Activated CD4-positive, alpha-beta T cell treated with anti-CD3 and anti-CD28 coated beads for 36 hours (primary cell): ENCODE measurements at regions of chr2 and their contacts with region 1.

Region 1: GRCh38 chr2:203730076-203730729 is 23.8 kb downstream of the CD28 start:
- DNase-seq: no peak
- ATAC-seq: peak; percentile 50
- H3K4me3 Mint-ChIP-seq: peak overlapping the region; percentile 46
- H3K27ac Mint-ChIP-seq: peak overlapping the region; percentile 99
- H3K4me1 Mint-ChIP-seq: peaks cover 93% of the 10 kb centered on the region
- H3K27me3 Mint-ChIP-seq: no peaks in the 10 kb centered on the region

Region 2: DNA sequence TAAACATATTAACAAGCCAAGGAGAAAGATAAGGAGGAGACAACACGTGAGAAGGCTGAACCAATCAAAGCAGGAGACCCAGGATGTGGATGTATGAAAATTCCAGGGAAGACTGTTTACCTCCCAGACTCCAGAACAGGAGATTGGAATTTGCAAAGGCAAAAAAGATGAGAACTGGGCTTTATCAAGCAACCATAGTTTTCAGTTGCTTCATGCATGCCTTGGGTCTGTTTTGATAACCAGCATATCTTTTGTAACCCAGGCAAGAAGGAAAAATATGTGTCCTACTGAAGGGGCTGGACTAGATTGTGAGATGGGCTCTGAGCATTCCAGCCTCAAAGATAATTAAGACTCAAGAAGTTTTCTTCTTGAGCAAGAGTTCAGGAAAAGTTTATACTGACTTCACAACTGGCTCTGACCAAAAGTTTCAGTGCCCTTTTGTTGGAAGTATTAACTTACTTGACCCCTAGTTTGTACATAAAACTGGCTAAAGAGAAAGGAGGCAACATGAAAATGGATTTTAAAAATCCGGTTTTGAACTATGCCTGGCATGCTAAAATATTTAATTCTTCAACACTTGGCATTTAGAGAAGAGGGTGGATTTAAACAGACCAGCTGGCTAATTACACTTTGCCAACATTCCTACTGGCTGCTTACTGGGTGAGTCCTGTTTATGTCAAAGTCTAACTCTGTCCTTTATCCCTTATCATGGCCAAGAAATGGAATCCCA is 103.1 kb before region 1 on chr2:
- CTCF ChIA-PET with region 1: no interaction called
- POLR2A ChIA-PET with region 1: no interaction called
- intact Hi-C with region 1: no loop called
- DNase-seq: no peak
- ATAC-seq: no peak
- H3K4me3 Mint-ChIP-seq: no peak overlapping the region
- H3K27ac Mint-ChIP-seq: no peak overlapping the region
- H3K4me1 Mint-ChIP-seq: peaks cover 8% of the 10 kb centered on the region
- H3K27me3 Mint-ChIP-seq: no peaks in the 10 kb centered on the region

Region 3: GRCh38 chr2:203718087-203718486 is 12.1 kb before region 1 on chr2:
- CTCF ChIA-PET with region 1: interaction called, 72 read pairs
- POLR2A ChIA-PET with region 1: interaction called, 37 read pairs
- intact Hi-C with region 1: loop called (anchors 1 kb)
- DNase-seq: peak; percentile 77
- ATAC-seq: peak; percentile 63
- H3K4me3 Mint-ChIP-seq: peak overlapping the region; percentile 63
- H3K27ac Mint-ChIP-seq: peak overlapping the region; percentile 95
- H3K4me1 Mint-ChIP-seq: peaks cover 97% of the 10 kb centered on the region
- H3K27me3 Mint-ChIP-seq: no peaks in the 10 kb centered on the region

Region 4: GRCh38 chr2:203759690-203760365 is 29.6 kb after region 1 on chr2:
- CTCF ChIA-PET with region 1: interaction called, 3 read pairs
- POLR2A ChIA-PET with region 1: interaction called, 23 read pairs
- intact Hi-C with region 1: loop called (anchors 1 kb)
- DNase-seq: no peak
- ATAC-seq: no peak
- H3K4me3 Mint-ChIP-seq: no peak overlapping the region
- H3K27ac Mint-ChIP-seq: no peak overlapping the region
- H3K4me1 Mint-ChIP-seq: peaks cover 61% of the 10 kb centered on the region
- H3K27me3 Mint-ChIP-seq: no peaks in the 10 kb centered on the region

Region 5: DNA sequence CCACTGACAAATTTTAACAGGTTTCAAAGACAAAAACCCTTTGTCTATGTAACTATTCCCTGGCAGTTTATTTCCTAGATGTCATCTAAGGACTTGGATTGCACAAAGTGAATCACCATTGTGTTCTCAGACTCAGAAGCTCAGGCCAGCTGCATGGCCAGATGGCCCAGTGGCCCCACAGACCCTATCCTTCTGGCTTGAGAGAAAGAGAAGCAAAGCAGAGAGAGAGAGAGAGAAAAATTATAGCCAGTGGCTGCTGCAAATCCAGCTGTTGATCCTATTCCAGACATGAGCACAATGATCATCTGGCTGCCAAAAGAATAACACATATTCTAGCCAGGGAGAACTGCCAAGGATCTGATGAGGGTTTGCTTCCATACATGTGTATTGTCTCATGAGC is 163.2 kb after region 1 on chr2:
- CTCF ChIA-PET with region 1: no interaction called
- POLR2A ChIA-PET with region 1: interaction called, 3 read pairs
- intact Hi-C with region 1: loop called in 1 of 2 experiments (anchors 2 kb)
- DNase-seq: no peak
- ATAC-seq: no peak
- H3K4me3 Mint-ChIP-seq: peak overlapping the region; percentile 23
- H3K27ac Mint-ChIP-seq: peak overlapping the region; percentile 85
- H3K4me1 Mint-ChIP-seq: peaks cover 78% of the 10 kb centered on the region
- H3K27me3 Mint-ChIP-seq: peaks cover 2% of the 10 kb centered on the region

Region 6: GRCh38 chr2:203940039-203940438 is 209.8 kb after region 1 on chr2:
- CTCF ChIA-PET with region 1: no interaction called
- POLR2A ChIA-PET with region 1: no interaction called
- intact Hi-C with region 1: loop called in 1 of 2 experiments (anchors 2 kb)
- DNase-seq: no peak
- ATAC-seq: peak; percentile 7
- H3K4me3 Mint-ChIP-seq: peak overlapping the region; percentile 87
- H3K27ac Mint-ChIP-seq: peak overlapping the region; percentile 98
- H3K4me1 Mint-ChIP-seq: peaks cover 53% of the 10 kb centered on the region
- H3K27me3 Mint-ChIP-seq: no peaks in the 10 kb centered on the region

Region 7: GRCh38 chr2:204108330-204108751 is 378.1 kb after region 1 on chr2:
- CTCF ChIA-PET with region 1: no interaction called
- POLR2A ChIA-PET with region 1: no interaction called
- intact Hi-C with region 1: loop called (anchors 5 to 10 kb)
- DNase-seq: peak; percentile 74
- ATAC-seq: peak; percentile 30
- H3K4me3 Mint-ChIP-seq: peak overlapping the region; percentile 58
- H3K27ac Mint-ChIP-seq: peak overlapping the region; percentile 92
- H3K4me1 Mint-ChIP-seq: peaks cover 75% of the 10 kb centered on the region
- H3K27me3 Mint-ChIP-seq: peaks cover 2% of the 10 kb centered on the region

Region 8: GRCh38 chr2:204434660-204435462 is 704.7 kb after region 1 on chr2:
- CTCF ChIA-PET with region 1: no interaction called
- POLR2A ChIA-PET with region 1: no interaction called
- intact Hi-C with region 1: no loop called
- DNase-seq: no peak
- ATAC-seq: no peak
- H3K4me3 Mint-ChIP-seq: no peak overlapping the region
- H3K27ac Mint-ChIP-seq: no peak overlapping the region
- H3K4me1 Mint-ChIP-seq: no peaks in the 10 kb centered on the region
- H3K27me3 Mint-ChIP-seq: peaks cover 8% of the 10 kb centered on the region